ENCODE measurements at regions of chr12 and their contacts with region 1.

Region 1: DNA sequence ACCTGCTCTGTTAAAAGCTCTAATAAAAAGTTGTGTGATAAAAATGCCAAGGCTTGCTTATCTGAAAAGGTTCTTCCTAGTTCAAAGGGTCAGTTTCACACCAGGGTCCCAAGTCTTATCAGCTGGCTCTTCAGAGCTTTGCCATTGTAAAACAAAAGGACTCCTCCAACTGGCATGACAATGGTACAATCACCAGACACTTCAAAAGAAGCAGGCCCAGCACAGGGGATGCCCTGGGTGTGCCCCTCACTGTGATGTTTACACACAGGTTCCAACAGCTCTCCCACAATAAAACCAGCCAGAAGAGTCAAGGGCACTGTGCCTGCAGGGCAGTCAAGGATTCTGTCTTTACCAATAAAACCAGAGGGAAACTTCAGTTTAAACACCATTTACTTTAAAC is 78.7 kb downstream of the PRICKLE1 start:
- DNase-seq: no peak

Region 2: GRCh38 chr12:42308390-42308789 is 202.4 kb before region 1 on chr12:
- CTCF ChIA-PET with region 1: interaction called, 10 read pairs
- POLR2A ChIA-PET with region 1: no interaction called
- DNase-seq: no peak

Measured in HEK293T (cell line).